B cell (primary cell): ENCODE measurements at regions of chr16 and their contacts with region 1.

Region 1: DNA sequence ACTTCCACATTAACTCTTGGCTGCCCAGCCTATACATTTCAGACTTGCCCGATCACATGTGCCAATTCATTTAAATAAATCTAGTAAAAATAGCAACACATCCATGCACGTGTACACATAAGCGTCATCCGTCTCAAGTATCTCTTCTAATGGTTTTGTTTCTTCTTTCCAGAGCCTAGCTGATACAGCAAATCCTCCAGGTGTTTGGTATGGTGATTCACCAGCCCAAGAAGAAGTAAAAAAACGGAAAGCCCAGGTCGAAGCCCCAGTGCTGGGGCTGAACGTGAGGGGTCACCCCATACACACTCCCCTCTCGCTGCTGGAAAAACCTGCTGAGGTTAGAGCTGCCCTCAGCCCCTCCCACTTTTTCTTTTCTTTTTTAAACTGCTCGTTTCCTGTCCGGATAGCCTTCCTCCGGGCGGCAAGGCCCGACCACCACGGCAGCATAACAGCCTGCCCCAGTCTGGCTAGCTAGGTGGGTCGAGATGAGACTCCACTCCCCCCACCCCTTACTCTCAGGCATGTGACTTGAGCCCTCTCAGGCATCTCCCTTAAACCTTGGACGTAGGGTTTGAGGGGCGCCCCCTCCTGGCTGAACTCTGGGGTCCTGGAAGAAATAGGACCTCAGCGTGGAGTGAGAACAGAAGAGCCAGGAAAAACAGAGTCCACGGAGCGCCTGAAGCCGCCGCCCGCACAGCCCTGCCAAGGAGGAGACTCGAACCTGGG is 13.9 kb upstream of the OR1F1 start:
- DNase-seq: peak; percentile 44
- ATAC-seq: no peak
- H3K4me3 ChIP-seq: peak overlapping the region in 1 of 5 experiments; percentile 33
- H3K4me3 Mint-ChIP-seq: peak overlapping the region; percentile 23
- H3K27ac ChIP-seq: no peak overlapping the region
- H3K27ac Mint-ChIP-seq: no peak overlapping the region
- H3K4me1 ChIP-seq: peaks cover 40 to 47% of the 10 kb centered on the region in 2 donors
- H3K4me1 Mint-ChIP-seq: peaks cover 29% of the 10 kb centered on the region
- H3K27me3 ChIP-seq: peaks cover 0 to 84% (median 55%) of the 10 kb centered on the region in 4 experiments
- H3K27me3 Mint-ChIP-seq: peaks cover 77% of the 10 kb centered on the region
- CTCF ChIP-seq: no peak

Region 2: GRCh38 chr16:3045357-3045728 is 128.7 kb before region 1 on chr16:
- CTCF ChIA-PET with region 1: no interaction called
- POLR2A ChIA-PET with region 1: interaction called, 3 read pairs
- intact Hi-C with region 1: loop called (anchors 5 kb)
- DNase-seq: peak; percentile 43
- ATAC-seq: peak; percentile 15
- H3K4me3 ChIP-seq: peak overlapping the region in 3 of 5 experiments; percentile 18 to 58 (median 53)
- H3K4me3 Mint-ChIP-seq: peak overlapping the region; percentile 81
- H3K27ac ChIP-seq: no peak overlapping the region
- H3K27ac Mint-ChIP-seq: no peak overlapping the region
- H3K4me1 ChIP-seq: peaks cover 21% of the 10 kb centered on the region in 2 donors
- H3K4me1 Mint-ChIP-seq: peaks cover 11% of the 10 kb centered on the region
- H3K27me3 ChIP-seq: peaks cover 0 to 68% (median 33%) of the 10 kb centered on the region in 4 experiments
- H3K27me3 Mint-ChIP-seq: peaks cover 31% of the 10 kb centered on the region
- CTCF ChIP-seq: no peak

Region 3: GRCh38 chr16:3188925-3189825 is 15.1 kb after region 1 on chr16:
- CTCF ChIA-PET with region 1: interaction called, 5 read pairs
- POLR2A ChIA-PET with region 1: no interaction called
- intact Hi-C with region 1: loop called (anchors 2 kb)
- DNase-seq: peak; percentile 58
- ATAC-seq: no peak
- H3K4me3 ChIP-seq: peak overlapping the region in 2 of 5 experiments; percentile 1 to 11
- H3K4me3 Mint-ChIP-seq: peak overlapping the region; percentile 73
- H3K27ac ChIP-seq: no peak overlapping the region
- H3K27ac Mint-ChIP-seq: peak overlapping the region; percentile 46
- H3K4me1 ChIP-seq: peaks cover 27 to 29% of the 10 kb centered on the region in 2 donors
- H3K4me1 Mint-ChIP-seq: peaks cover 36% of the 10 kb centered on the region
- H3K27me3 ChIP-seq: peaks cover 0 to 95% (median 74%) of the 10 kb centered on the region in 4 experiments
- H3K27me3 Mint-ChIP-seq: peaks cover 67% of the 10 kb centered on the region
- CTCF ChIP-seq: no peak

Region 4: GRCh38 chr16:3292604-3293003 is 118.5 kb after region 1 on chr16:
- CTCF ChIA-PET with region 1: no interaction called
- POLR2A ChIA-PET with region 1: no interaction called
- intact Hi-C with region 1: no loop called
- DNase-seq: no peak
- ATAC-seq: no peak
- H3K4me3 ChIP-seq: no peak overlapping the region
- H3K4me3 Mint-ChIP-seq: no peak overlapping the region
- H3K27ac ChIP-seq: no peak overlapping the region
- H3K27ac Mint-ChIP-seq: no peak overlapping the region
- H3K4me1 ChIP-seq: no peaks in the 10 kb centered on the region
- H3K4me1 Mint-ChIP-seq: peaks cover 8% of the 10 kb centered on the region
- H3K27me3 ChIP-seq: no peaks in the 10 kb centered on the region
- H3K27me3 Mint-ChIP-seq: no peaks in the 10 kb centered on the region
- CTCF ChIP-seq: no peak